GM12878 (cell line): ENCODE measurements at regions of chr2 and their contacts with region 1.

Region 1: DNA sequence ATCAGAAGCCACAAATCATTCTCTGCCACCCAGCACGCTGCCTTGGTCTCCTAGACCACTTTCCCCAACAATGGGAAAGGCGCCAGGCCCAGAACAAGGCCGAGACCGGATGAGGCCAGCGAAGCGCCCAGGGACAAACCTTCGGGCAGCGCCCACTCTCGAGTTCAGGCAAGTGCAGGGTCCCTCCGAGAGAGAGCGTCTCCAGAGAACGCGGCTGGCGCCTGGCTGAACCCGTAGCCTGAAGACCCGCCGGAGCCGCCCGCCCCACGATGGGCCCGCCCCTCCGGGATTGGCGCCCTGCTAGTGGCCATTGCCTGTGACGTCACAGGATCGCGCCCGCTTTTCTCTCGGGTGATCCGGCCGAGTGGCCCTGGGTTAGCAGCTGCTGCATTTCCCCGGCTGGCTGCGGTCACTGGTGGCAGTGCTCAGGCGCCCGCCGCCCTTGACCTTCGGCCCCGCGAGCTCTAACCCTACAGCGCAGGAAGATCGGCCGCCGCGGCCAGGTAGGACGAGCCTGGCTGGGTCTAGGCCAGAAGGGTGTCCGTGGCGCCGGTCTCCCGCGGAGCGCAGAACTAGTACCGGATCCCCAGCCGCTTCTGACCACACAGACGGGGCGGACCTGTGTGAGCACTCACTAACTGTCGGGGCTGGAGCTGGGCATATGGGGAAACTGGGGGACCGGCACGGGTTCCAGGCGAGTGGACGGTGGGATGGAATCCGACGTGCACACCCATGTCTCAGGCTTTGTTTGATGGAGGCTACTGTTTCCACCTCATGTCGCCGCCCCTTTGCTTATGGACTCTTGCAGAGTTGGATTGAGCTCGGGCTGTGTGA is at the start of gene FAHD2A:
- DNase-seq: peak; percentile 38
- ATAC-seq: peak; percentile 95
- H3K4me3 ChIP-seq: peak within 1 kb of the TSS; percentile 89
- H3K27ac ChIP-seq: peak within 1 kb of the TSS; percentile 57
- H3K4me1 ChIP-seq: peaks cover 5% of the 10 kb centered on the region
- H3K27me3 ChIP-seq: no peaks in the 10 kb centered on the region
- CTCF ChIP-seq: no peak
- EP300 ChIP-seq: no peak
- POLR2A ChIP-seq: peak; percentile 95
- RAD21 ChIP-seq: no peak
- polyA plus RNA-seq, gene FAHD2A: 11.2 to 15.2 TPM

Region 2: GRCh38 chr2:95264624-95265023 is 138.0 kb before region 1 on chr2:
- CTCF ChIA-PET with region 1: no interaction called
- POLR2A ChIA-PET with region 1: no interaction called
- RAD21 ChIA-PET with region 1: no interaction called
- SMC1A ChIA-PET with region 1: no interaction called
- in situ Hi-C with region 1: no loop called
- intact Hi-C with region 1: no loop called
- DNase-seq: no peak
- ATAC-seq: no peak
- H3K4me3 ChIP-seq: no peak overlapping the region
- H3K27ac ChIP-seq: no peak overlapping the region
- H3K4me1 ChIP-seq: no peaks in the 10 kb centered on the region
- H3K27me3 ChIP-seq: peaks cover 0 to 1% of the 10 kb centered on the region in 2 experiments; a peak in 2 of 4 replicates
- CTCF ChIP-seq: no peak
- EP300 ChIP-seq: no peak
- POLR2A ChIP-seq: no peak
- RAD21 ChIP-seq: no peak

Region 3: GRCh38 chr2:95296880-95297487 is 105.6 kb before region 1 on chr2 and contains the start of gene KCNIP3:
- CTCF ChIA-PET with region 1: no interaction called
- POLR2A ChIA-PET with region 1: no interaction called
- RAD21 ChIA-PET with region 1: no interaction called
- SMC1A ChIA-PET with region 1: no interaction called
- in situ Hi-C with region 1: no loop called
- intact Hi-C with region 1: no loop called
- DNase-seq: no peak
- ATAC-seq: no peak
- H3K4me3 ChIP-seq: no peak within 1 kb of the TSS
- H3K27ac ChIP-seq: no peak within 1 kb of the TSS
- H3K4me1 ChIP-seq: no peaks in the 10 kb centered on the region
- H3K27me3 ChIP-seq: no peaks in the 10 kb centered on the region
- CTCF ChIP-seq: no peak
- EP300 ChIP-seq: no peak
- POLR2A ChIP-seq: no peak
- RAD21 ChIP-seq: no peak
- polyA plus RNA-seq, gene KCNIP3: not detected

Region 4: GRCh38 chr2:95389245-95390119 is 13.1 kb before region 1 on chr2:
- CTCF ChIA-PET with region 1: interaction called, 41 read pairs
- POLR2A ChIA-PET with region 1: no interaction called
- RAD21 ChIA-PET with region 1: interaction called, 10 read pairs
- SMC1A ChIA-PET with region 1: interaction called, 5 read pairs
- in situ Hi-C with region 1: no loop called
- intact Hi-C with region 1: no loop called
- DNase-seq: no peak
- ATAC-seq: peak; percentile 95
- H3K4me3 ChIP-seq: no peak overlapping the region
- H3K27ac ChIP-seq: no peak overlapping the region
- H3K4me1 ChIP-seq: no peaks in the 10 kb centered on the region
- H3K27me3 ChIP-seq: no peaks in the 10 kb centered on the region; a peak in 2 of 4 replicates
- CTCF ChIP-seq: peak; percentile 85 to 97 (median 91)
- EP300 ChIP-seq: no peak
- POLR2A ChIP-seq: no peak
- RAD21 ChIP-seq: peak; percentile 69

Region 5: GRCh38 chr2:95728878-95729596 is 326.4 kb after region 1 on chr2:
- CTCF ChIA-PET with region 1: no interaction called
- POLR2A ChIA-PET with region 1: no interaction called
- RAD21 ChIA-PET with region 1: no interaction called
- SMC1A ChIA-PET with region 1: no interaction called
- in situ Hi-C with region 1: loop called (anchors 5 kb)
- intact Hi-C with region 1: no loop called
- DNase-seq: peak; percentile 17
- ATAC-seq: peak; percentile 86
- H3K4me3 ChIP-seq: no peak overlapping the region
- H3K27ac ChIP-seq: no peak overlapping the region
- H3K4me1 ChIP-seq: no peaks in the 10 kb centered on the region
- H3K27me3 ChIP-seq: no peaks in the 10 kb centered on the region
- CTCF ChIP-seq: peak; percentile 43 to 51 (median 50); a peak in 5 of 6 replicates
- EP300 ChIP-seq: no peak
- POLR2A ChIP-seq: no peak
- RAD21 ChIP-seq: peak; percentile 74